Lower lobe of right lung (tissue), 2 donors: ENCODE measurements at regions of chr17 and their contacts with region 1.

Region 1: DNA sequence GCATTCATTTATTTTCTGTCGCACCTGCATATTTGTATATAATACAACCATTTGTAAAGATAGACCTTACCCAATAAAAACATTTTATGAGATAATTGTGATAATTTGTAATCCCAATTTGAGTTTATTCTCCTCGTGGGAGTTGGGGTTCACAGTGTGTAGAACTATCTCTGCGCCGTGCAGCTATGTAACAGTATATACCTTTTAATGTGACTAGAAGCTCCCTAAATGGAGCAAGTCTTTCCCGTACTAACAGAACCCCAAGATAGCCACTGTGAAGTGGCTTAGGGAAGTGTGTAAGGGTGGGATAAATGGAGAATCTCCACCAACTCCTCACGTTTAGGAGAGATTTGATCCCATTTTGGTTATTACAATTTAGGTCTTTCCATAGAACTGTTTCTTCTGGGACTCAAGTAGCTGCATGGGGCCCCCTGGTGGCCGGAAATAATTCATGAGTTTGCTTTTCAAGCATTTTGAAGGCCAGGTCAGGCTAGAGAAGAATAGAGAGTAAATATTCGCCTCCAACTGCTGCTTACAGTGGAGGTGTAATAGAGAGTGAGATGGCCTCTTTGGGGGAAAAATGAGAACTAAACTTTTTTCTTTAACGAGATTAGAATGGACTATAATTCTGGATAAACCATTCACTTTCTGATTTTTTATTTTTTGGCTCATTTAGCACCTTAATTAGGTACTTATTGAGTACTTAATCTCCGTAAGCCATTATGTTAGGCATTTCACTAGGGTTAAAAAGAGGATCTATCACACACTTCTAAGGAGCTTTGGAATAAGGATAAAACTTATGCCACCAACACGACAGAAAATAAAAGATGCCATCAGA is 4.5 kb downstream of the TMEM100 start:
- DNase-seq: peak; percentile 77
- ATAC-seq: peak; percentile 63 to 67
- H3K4me3 ChIP-seq: no peak overlapping the region
- H3K27ac ChIP-seq: peak overlapping the region; percentile 80
- H3K4me1 ChIP-seq: no peaks in the 10 kb centered on the region
- H3K27me3 ChIP-seq: no peaks in the 10 kb centered on the region
- CTCF ChIP-seq: peak; percentile 79

Region 2: DNA sequence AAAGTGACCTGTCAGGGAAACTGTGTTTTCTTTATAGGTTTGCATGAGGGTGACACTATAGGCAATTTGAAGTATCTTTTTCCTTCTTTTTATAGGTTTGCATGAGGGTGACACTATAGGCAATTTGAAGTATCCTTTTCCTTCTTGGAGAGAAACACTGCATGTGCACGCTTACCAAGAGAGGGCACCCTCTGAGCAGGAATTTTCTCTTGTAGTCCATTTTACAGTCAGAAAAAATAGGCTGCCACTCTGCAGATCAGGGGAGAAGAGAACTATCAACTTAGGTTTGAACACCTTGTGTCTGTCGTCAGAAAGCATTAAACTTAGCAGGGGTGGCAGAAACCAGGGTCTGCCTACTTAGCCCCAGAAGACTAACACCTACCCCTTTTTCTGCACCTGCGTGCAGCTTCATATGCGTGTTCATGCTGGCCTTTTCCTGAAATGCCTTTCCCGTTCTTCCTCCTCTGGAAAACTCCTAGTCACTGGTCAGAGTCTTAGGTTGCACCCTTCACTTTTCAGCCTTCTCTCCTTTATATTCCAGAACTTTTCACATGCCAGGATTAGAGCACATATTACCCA is 190.5 kb before region 1 on chr17:
- intact Hi-C with region 1: loop called (anchors 5 kb)
- DNase-seq: no peak
- ATAC-seq: peak; percentile 49 to 73
- H3K4me3 ChIP-seq: no peak overlapping the region
- H3K27ac ChIP-seq: no peak overlapping the region
- H3K4me1 ChIP-seq: peaks cover 8% of the 10 kb centered on the region
- H3K27me3 ChIP-seq: no peaks in the 10 kb centered on the region
- CTCF ChIP-seq: peak; percentile 59

Region 3: GRCh38 chr17:55664287-55664686 is 53.8 kb before region 1 on chr17:
- intact Hi-C with region 1: no loop called
- DNase-seq: no peak
- ATAC-seq: peak; percentile 71 to 77
- H3K4me3 ChIP-seq: no peak overlapping the region
- H3K27ac ChIP-seq: no peak overlapping the region
- H3K4me1 ChIP-seq: peaks cover 24% of the 10 kb centered on the region
- H3K27me3 ChIP-seq: no peaks in the 10 kb centered on the region
- CTCF ChIP-seq: no peak

Region 4: DNA sequence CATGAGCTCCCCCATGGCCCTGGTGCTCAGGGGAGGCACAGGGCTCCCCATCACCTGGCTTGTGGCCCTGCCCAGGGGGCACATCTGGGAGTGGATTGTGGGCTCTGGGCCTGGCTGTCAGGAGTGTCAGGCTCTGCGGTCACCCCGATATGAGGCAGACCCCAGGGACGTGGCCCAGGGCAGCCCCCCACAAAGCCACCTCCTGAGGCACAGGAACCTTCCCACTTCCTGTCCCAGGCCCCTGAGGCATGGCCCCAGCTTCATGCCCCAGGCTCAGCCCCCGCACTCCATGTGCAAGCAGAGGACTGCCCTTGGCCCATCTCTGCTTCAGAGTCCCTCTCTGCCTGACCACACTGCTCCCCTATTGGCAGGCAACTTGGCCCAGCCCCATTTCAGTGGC is 193.1 kb after region 1 on chr17:
- intact Hi-C with region 1: no loop called
- DNase-seq: no peak
- ATAC-seq: no peak
- H3K4me3 ChIP-seq: no peak overlapping the region
- H3K27ac ChIP-seq: no peak overlapping the region
- H3K4me1 ChIP-seq: no peaks in the 10 kb centered on the region
- H3K27me3 ChIP-seq: peaks cover 3% of the 10 kb centered on the region
- CTCF ChIP-seq: no peak

Region 5: GRCh38 chr17:56085588-56086267 is 367.6 kb after region 1 on chr17:
- intact Hi-C with region 1: no loop called
- DNase-seq: no peak
- ATAC-seq: no peak
- H3K4me3 ChIP-seq: no peak overlapping the region
- H3K27ac ChIP-seq: no peak overlapping the region
- H3K4me1 ChIP-seq: no peaks in the 10 kb centered on the region
- H3K27me3 ChIP-seq: no peaks in the 10 kb centered on the region
- CTCF ChIP-seq: no peak